Activated naive CD4-positive, alpha-beta T cell treated with anti-CD3 and anti-CD28 coated beads for 36 hours (primary cell): ENCODE measurements at regions of chr4 and their contacts with region 1.

Region 1: DNA sequence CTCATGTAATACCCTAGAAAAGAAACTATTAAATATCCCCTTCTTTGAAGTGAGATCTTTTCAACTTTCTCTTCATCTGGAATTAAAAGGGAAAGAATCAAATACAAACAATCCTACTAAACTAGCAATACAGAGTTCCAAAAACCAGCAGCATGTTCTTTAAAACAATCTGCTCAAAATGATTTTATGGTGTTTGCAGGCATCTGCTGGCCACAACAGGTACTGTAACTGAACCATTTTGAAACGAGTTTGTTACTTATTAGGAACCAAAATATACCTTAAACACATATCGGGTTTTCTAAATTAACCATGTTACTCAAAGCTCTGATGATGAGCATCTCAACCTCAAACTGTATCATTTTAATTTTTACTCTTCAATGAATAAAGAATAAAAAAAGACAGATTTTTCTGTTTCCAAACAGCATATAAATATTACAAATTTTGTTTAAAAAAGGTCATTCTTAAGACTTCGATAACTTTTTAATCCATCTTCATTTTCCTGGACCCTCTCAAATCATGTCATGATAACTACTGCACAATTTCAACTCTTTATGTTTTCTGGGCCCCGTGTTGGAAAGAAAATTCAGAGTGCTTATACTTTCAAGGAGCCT is 56.5 kb downstream of the ARAP2 start:
- DNase-seq: peak; percentile 12
- H3K4me3 Mint-ChIP-seq: no peak overlapping the region
- H3K27ac Mint-ChIP-seq: no peak overlapping the region
- H3K4me1 Mint-ChIP-seq: peaks cover 15% of the 10 kb centered on the region
- H3K27me3 Mint-ChIP-seq: no peaks in the 10 kb centered on the region

Region 2: DNA sequence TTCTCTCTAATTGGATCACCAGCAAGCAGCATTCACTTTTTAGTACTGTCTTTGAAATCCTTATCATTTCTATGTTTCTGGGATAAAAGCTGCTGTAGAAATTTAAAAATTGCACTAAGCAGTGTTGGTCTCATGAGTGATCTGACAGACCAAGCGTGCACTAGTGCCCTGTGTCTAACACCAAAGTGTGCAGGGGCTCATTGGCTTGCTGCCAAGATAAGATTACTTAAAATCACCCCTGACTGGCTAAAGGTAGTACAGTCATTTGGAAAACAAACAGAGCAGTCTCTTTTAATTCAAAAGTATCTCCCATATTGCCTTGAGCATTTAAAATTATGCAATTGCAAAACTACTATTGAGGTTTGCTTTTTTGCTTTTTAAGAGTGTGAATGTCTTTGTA is 248.1 kb before region 1 on chr4:
- CTCF ChIA-PET with region 1: interaction called, 3 read pairs
- intact Hi-C with region 1: loop called (anchors 5 kb)
- DNase-seq: no peak
- H3K4me3 Mint-ChIP-seq: no peak overlapping the region
- H3K27ac Mint-ChIP-seq: no peak overlapping the region
- H3K4me1 Mint-ChIP-seq: no peaks in the 10 kb centered on the region
- H3K27me3 Mint-ChIP-seq: peaks cover 2% of the 10 kb centered on the region

Region 3: GRCh38 chr4:36081185-36081584 is 106.6 kb before region 1 on chr4:
- CTCF ChIA-PET with region 1: no interaction called
- intact Hi-C with region 1: no loop called
- DNase-seq: peak; percentile 48
- H3K4me3 Mint-ChIP-seq: no peak overlapping the region
- H3K27ac Mint-ChIP-seq: no peak overlapping the region
- H3K4me1 Mint-ChIP-seq: peaks cover 2% of the 10 kb centered on the region
- H3K27me3 Mint-ChIP-seq: no peaks in the 10 kb centered on the region